ENCODE measurements at regions of chr12 and their contacts with region 1.

Region 1: DNA sequence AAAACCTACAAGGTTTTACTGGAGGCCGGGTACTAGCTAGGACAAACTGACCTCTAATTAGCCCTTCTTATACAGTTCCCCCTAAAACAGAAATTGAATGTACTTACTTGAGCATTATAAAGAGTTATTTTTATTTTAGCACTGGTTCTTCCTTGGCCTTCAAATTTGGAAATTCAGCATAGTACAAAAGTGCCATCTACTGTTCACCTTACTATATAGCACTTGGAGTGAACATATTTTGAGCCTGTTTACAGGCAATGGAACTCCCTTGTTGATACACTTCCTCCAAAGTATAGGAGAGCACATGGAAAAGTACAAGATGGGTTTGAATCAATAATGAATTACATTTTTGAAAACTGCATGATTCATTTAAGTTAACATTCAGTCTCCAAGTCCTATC is 3.9 kb upstream of the POC1B start:
- DNase-seq: no peak
- H3K4me3 Mint-ChIP-seq: no peak overlapping the region
- H3K27ac Mint-ChIP-seq: no peak overlapping the region
- H3K4me1 Mint-ChIP-seq: peaks cover 12% of the 10 kb centered on the region
- H3K27me3 Mint-ChIP-seq: no peaks in the 10 kb centered on the region

Region 2: GRCh38 chr12:89051065-89051677 is 478.6 kb before region 1 on chr12:
- CTCF ChIA-PET with region 1: interaction called, 5 read pairs
- POLR2A ChIA-PET with region 1: no interaction called
- intact Hi-C with region 1: loop called (anchors 1 kb)
- DNase-seq: no peak
- H3K4me3 Mint-ChIP-seq: no peak overlapping the region
- H3K27ac Mint-ChIP-seq: no peak overlapping the region
- H3K4me1 Mint-ChIP-seq: peaks cover 13% of the 10 kb centered on the region
- H3K27me3 Mint-ChIP-seq: no peaks in the 10 kb centered on the region

Region 3: GRCh38 chr12:89632778-89633177 is 103.0 kb after region 1 on chr12:
- CTCF ChIA-PET with region 1: no interaction called
- POLR2A ChIA-PET with region 1: no interaction called
- intact Hi-C with region 1: no loop called
- DNase-seq: no peak
- H3K4me3 Mint-ChIP-seq: no peak overlapping the region
- H3K27ac Mint-ChIP-seq: no peak overlapping the region
- H3K4me1 Mint-ChIP-seq: peaks cover 15% of the 10 kb centered on the region
- H3K27me3 Mint-ChIP-seq: no peaks in the 10 kb centered on the region

Region 4: DNA sequence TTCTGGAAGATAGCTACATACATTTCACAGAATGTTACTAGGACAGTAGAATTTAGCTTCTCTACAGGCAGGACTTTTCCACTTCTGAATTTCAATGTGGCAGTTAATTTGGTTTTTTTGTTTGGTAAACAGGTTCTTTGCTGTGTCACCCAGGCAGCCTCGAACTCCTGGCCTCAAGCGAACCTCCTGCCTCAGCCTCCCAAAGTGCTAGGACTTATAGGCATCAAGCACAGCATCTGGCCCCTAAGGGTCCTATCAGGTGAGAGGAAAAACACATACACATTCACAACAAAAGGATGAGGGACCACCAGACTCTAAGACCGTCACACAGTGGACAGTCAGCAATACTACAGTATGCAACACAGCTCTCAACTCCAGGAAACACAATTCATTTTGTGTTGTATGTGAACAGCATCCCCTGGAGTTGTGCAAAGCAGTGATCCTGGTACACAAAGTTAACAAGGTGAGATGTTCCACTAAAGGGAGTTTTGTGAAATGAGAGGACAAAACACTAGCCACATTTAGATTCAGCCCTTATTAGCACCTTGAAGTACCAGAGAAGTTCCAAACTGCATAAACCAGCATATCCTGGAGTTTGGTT is 172.0 kb after region 1 on chr12:
- CTCF ChIA-PET with region 1: no interaction called
- POLR2A ChIA-PET with region 1: no interaction called
- intact Hi-C with region 1: no loop called
- DNase-seq: no peak
- H3K4me3 Mint-ChIP-seq: no peak overlapping the region
- H3K27ac Mint-ChIP-seq: no peak overlapping the region
- H3K4me1 Mint-ChIP-seq: peaks cover 87% of the 10 kb centered on the region
- H3K27me3 Mint-ChIP-seq: no peaks in the 10 kb centered on the region

Measured in activated CD4-positive, alpha-beta memory T cell treated with anti-CD3 and anti-CD28 coated beads for 36 hours (primary cell).